ENCODE measurements at regions of chr7 and their contacts with region 1.

Region 1: DNA sequence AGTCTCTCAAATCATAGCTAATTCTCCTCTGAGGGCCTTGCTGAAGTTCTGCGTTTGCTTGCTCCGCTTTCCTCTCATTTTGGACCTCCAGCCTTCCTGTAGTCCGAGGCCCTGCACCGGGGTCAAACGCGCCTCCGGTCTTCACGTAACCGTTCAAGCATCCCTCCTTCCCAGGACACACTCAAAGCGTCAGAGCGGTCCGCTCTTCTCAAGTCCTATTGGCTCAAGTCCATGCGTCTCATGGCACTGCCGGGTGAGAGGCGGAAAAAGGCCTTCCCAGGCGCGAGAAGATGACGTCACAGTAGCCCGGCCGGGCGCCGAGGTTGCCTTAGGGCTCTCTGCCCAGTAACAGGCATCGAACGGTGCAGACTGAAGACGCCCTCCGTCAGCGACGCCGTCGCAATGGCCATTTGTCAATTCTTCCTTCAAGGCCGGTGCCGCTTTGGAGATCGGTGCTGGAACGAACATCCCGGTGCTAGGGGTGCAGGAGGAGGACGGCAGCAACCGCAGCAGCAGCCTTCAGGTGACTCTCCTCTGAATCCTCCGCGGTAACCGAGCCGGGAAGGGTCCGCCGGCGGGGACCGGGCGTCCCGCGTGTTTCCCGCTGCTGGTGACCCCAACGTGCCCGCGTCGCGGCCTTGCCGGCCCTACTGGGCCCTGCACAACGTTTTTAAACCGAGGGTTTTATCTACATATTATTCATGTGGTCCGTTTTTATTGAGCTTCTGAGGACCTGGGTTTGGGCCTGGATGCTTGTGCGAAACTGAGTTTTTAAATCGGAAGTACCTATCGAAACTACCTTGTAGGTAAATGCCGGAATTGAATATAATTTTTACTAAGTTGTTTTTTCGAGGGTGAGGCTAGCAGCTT is at the start of gene NUP42:
- DNase-seq: peak; percentile 86 to 94 (median 92)
- H3K4me3 ChIP-seq: peak within 1 kb of the TSS; percentile 64 to 100 (median 90)
- H3K27ac ChIP-seq: peak within 1 kb of the TSS; percentile 42 to 98 (median 89)
- H3K27me3 ChIP-seq: no peaks in the 10 kb centered on the region
- CTCF ChIP-seq: peak in 37 of 56 donors; percentile 13 to 59 (median 24)
- total RNA-seq, gene NUP42: 26.1 to 58.3 (median 39.5) TPM

Region 2: DNA sequence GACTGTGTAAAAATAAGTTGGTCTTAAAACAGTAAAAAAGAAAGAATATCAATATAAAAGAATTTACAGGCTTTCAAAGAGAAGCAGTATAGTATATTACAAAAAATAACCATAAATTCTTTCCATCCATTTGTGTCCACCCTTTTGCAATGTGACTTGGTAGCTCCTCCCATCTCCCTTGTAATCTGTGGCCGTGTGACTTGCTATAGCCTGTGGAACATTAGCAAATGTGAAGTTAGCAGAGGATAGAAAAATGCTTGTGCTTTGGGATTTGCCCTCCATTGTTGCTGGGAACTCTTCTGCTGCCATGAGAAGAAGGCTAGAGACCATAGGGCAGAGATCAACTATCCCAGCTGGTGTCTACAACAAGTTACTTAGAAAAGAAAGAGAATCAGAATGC is 46.2 kb before region 1 on chr7:
- intact Hi-C with region 1: no loop called
- DNase-seq: no peak
- H3K4me3 ChIP-seq: no peak overlapping the region
- H3K27ac ChIP-seq: no peak overlapping the region
- H3K27me3 ChIP-seq: no peaks in the 10 kb centered on the region
- CTCF ChIP-seq: no peak

Region 3: GRCh38 chr7:23298885-23299769 is 117.2 kb after region 1 on chr7 and contains the start of gene MALSU1:
- intact Hi-C with region 1: loop called (anchors 2 to 5 kb)
- DNase-seq: peak; percentile 96 to 99 (median 98)
- H3K4me3 ChIP-seq: peak within 1 kb of the TSS; percentile 57 to 99 (median 92)
- H3K27ac ChIP-seq: peak within 1 kb of the TSS in 56 of 59 donors; percentile 3 to 89 (median 78)
- H3K27me3 ChIP-seq: no peaks in the 10 kb centered on the region
- CTCF ChIP-seq: peak in 30 of 56 donors; percentile 7 to 53 (median 24)
- total RNA-seq, gene MALSU1: 27.0 to 68.5 (median 47.7) TPM

Region 4: DNA sequence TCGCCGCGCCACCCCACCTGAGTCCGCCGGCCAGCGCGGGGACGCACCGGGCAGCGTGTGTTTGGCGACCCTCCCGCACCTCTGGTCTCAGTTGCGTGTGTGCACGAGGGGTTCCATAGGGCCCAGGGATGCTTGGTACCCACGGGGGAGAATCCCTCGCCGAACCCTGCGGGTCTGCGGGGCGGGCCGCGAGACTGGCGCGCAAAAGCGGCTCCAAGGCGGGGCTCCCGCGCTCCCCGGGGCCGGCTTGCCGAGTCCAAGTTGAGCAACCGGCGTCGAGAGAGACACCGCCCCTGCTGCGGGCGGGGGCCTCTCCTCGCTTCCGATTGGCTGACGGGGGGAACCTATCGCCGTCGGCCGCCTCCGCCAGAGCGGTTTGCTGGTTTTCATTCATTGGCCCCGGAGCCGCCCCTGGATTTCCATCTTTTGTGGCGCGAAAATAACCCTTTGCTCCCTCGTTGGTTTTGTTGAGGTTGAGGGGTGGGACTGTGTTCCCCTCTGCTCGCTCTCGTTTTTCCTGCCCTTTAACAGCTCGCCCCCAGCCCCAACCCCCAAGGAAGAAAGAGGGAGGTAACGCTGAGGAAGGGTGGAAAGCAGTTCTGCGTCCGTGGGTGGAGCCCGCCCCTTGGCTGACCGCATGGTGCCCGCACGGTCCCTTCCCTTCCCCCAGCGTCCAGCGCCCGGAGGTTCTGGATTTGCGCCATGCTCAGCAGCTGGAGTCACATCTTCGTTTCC is 292.3 kb after region 1 on chr7:
- intact Hi-C with region 1: no loop called
- DNase-seq: peak in 1 of 10 donors; percentile 13
- H3K4me3 ChIP-seq: peak overlapping the region in 22 of 59 donors; percentile 2 to 44 (median 18)
- H3K27ac ChIP-seq: no peak overlapping the region
- H3K27me3 ChIP-seq: peaks cover 19 to 100% (median 99%) of the 10 kb centered on the region in 45 donors
- CTCF ChIP-seq: no peak